AG04450 (cell line): ENCODE measurements at regions of chr1 and their contacts with region 1.

Region 1: GRCh38 chr1:39196244-39197215 is 8.0 kb upstream of the MACF1 start:
- DNase-seq: no peak
- H3K4me3 ChIP-seq: no peak overlapping the region
- H3K27ac ChIP-seq: no peak overlapping the region
- H3K27me3 ChIP-seq: no peaks in the 10 kb centered on the region
- CTCF ChIP-seq: no peak

Region 2: DNA sequence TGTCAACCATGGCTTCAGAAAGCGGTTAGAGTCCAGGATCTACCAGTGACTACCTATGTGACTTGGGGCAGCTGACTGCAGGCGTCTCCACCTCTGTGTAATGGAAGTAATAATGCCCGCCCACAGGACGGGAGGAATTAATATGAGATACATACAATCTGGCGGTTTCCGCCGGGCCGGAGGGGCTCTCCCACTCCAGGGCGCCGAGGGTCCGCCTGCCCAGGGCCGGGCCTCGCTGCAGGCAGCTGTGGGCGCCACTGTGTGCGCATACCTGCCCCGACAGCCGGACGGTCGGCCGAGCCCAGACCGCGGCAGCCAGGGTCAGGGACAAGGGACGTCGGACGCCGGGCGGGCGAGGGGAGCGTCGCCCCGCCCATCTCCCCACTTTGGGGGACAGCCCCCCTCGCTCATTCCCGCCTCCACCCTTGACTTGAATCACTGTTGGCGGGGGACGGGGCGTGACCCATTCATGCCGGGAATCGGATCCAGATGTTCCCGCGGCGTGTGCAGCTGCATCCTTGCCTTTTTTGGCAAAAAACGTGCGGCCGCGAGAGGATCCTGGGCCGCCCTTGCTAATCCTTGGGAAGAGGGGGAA is 1200.7 kb before region 1 on chr1:
- CTCF ChIA-PET with region 1: no interaction called
- POLR2A ChIA-PET with region 1: no interaction called
- DNase-seq: peak; percentile 84
- H3K4me3 ChIP-seq: peak overlapping the region; percentile 56
- H3K27ac ChIP-seq: peak overlapping the region; percentile 94
- H3K27me3 ChIP-seq: no peaks in the 10 kb centered on the region
- CTCF ChIP-seq: no peak

Region 3: GRCh38 chr1:39105061-39105840 is 91.3 kb before region 1 on chr1:
- CTCF ChIA-PET with region 1: interaction called, 35 read pairs
- POLR2A ChIA-PET with region 1: interaction called, 5 read pairs
- DNase-seq: no peak
- H3K4me3 ChIP-seq: peak overlapping the region; percentile 84
- H3K27ac ChIP-seq: peak overlapping the region; percentile 84
- H3K27me3 ChIP-seq: no peaks in the 10 kb centered on the region
- CTCF ChIP-seq: no peak

Region 4: GRCh38 chr1:39142401-39143151 is 54.0 kb before region 1 on chr1:
- CTCF ChIA-PET with region 1: interaction called, 23 read pairs
- POLR2A ChIA-PET with region 1: interaction called, 7 read pairs
- DNase-seq: no peak
- H3K4me3 ChIP-seq: no peak overlapping the region
- H3K27ac ChIP-seq: peak overlapping the region; percentile 87
- H3K27me3 ChIP-seq: no peaks in the 10 kb centered on the region
- CTCF ChIP-seq: no peak

Region 5: DNA sequence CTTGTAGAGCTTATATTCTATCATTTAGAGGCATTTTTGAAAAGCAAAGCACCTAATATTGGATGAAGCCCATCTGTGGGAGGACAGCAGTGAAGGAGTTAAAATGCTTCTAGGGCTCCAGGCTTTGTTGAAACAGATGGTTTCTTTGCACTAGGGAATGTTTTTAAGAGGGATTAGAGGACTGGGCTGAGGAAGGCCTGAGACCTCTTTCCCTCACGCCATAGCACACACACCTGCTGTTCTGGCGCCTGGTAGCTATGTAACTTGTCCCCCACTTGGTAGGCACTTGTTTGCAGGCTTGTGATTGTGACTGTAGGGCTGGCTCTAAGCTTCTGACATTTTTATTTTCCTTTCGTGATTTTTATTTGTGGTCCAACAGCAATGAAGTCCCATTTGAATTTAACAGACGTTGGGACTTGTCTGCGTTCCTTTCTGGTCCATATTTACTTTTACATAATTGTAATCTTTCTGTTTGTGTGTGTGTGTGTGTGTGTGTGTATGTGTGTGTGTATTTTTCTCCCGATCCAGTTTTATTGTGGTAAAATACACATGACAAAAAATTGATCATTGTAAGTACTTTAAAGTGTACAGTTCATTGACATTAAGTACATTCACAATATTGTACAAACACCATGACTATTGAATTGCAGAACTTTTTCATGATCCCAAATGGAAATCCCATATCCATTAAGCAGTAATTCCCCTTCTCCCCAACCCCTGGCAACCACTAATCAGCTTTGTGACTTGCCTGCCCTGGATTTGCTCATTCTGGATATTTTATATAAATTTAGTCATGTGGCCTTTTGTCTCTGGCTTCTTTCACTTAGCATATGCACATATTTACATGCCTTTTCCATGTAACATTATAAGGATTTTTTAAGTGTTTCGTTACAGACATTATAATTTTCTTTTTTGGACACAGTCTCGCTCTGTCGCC is 25.5 kb before region 1 on chr1:
- CTCF ChIA-PET with region 1: interaction called, 26 read pairs
- POLR2A ChIA-PET with region 1: interaction called, 3 read pairs
- DNase-seq: no peak
- H3K4me3 ChIP-seq: no peak overlapping the region
- H3K27ac ChIP-seq: no peak overlapping the region
- H3K27me3 ChIP-seq: no peaks in the 10 kb centered on the region
- CTCF ChIP-seq: no peak

Region 6: DNA sequence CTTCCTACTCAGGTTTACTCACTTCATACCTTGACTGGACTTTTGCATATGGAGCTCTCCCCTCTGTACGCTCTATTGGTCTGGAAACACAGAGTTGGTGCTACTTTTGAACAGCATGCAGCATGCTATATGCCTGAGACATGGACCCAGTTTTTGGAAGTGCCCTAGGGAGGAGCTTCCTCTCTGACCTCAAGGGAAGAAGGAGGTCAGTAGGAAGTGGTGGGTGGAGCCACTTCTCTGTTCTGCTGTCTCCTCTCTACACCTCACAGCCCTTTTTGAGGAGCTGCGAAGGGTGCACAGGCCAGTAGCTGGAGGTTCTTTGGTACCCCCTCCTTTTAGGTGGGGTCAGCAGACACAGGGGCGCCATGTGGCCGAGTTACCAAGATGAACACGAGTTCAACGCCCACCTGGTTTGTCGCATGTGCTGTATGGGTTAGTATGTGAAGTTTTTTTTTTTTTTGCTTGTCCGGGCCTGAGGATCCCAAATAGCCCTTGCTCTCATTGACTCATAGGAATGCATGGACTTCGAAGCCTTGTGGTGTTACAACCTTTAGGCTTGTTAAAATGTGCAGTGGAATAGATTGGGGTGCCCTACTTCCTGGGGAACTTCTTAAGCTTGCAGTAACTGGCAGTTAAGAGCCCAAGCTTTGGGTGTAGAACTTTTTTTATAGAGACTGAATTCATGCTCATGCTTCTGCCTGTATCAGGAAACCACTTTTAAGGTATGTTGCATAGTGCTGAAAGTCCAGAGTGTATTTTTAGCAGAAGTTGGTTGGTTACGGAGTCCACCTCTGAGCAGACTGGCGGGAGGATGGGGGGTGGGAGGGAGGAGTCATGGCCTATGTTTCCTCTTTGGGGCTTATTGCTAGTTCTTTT is 18.7 kb after region 1 on chr1:
- CTCF ChIA-PET with region 1: interaction called, 14 read pairs
- POLR2A ChIA-PET with region 1: interaction called, 5 read pairs
- DNase-seq: no peak
- H3K4me3 ChIP-seq: no peak overlapping the region
- H3K27ac ChIP-seq: peak overlapping the region; percentile 13
- H3K27me3 ChIP-seq: no peaks in the 10 kb centered on the region
- CTCF ChIP-seq: no peak

Region 7: DNA sequence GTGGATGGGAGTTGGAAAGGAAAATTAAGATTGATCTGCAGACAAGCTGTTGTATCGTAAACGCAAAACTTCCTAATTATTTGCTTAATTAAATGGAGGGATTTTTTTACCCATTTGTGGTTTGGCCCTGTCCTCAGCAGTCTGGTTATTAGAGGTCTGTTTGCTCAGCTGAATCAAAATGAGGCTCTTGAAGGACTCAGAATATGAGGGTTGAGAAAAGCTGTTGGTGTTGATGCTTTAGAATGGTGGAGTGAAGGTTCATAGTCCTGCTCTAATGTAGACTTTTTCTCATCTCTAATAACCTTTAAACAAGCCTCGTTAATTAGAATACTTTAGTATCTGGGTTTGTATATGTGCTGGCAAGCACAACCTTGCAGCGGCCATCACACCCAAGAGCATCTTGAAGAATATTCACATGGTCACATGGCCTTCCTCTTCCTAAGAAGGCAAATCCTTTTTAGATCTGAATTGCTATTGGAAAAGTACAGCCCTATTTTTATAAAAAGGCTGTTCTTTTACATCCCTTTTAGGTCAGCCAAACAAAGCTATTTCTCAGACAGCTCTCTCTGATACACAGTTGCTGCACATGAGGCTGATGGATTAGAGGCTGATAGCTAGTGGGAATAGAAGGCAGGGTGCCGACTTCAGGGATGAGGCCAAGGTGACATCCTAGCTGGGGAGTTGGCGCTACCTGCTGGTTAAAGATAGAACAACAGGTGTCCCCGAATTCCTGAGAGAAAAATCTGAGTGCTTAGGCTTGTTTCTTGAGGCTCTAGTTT is 61.8 kb after region 1 on chr1:
- CTCF ChIA-PET with region 1: interaction called, 60 read pairs
- POLR2A ChIA-PET with region 1: interaction called, 4 read pairs
- DNase-seq: no peak
- H3K4me3 ChIP-seq: no peak overlapping the region
- H3K27ac ChIP-seq: no peak overlapping the region
- H3K27me3 ChIP-seq: no peaks in the 10 kb centered on the region
- CTCF ChIP-seq: peak; percentile 81

Region 8: GRCh38 chr1:39538588-39539465 is 342.3 kb after region 1 on chr1:
- CTCF ChIA-PET with region 1: interaction called, 10 read pairs
- POLR2A ChIA-PET with region 1: no interaction called
- DNase-seq: peak; percentile 33
- H3K4me3 ChIP-seq: no peak overlapping the region
- H3K27ac ChIP-seq: no peak overlapping the region
- H3K27me3 ChIP-seq: no peaks in the 10 kb centered on the region
- CTCF ChIP-seq: peak; percentile 96